Heart right ventricle (tissue), 16 donors: ENCODE measurements at regions of chr7 and their contacts with region 1.

Region 1: DNA sequence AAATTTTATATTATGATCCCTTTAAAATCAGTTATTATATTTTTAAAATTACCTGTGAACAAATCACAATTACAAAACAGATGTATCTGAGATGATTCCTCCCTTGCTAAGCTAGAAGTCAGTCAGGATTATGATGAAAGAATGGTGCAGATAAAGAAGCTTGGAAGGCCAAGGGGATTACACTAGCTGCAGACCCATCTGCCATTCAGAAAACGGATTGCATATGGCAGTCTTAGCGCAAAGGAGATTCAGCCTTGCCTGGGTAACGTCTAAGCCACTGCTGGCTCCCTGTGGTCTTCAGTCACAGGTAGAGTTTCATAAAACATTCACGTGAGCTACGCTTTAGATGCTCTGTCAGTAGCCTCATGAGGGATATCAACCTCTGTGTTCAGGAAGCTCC is 222.2 kb downstream of the POU6F2 start:
- DNase-seq: no peak
- ATAC-seq: no peak
- H3K4me3 ChIP-seq: no peak overlapping the region
- H3K27ac ChIP-seq: no peak overlapping the region
- H3K4me1 ChIP-seq: no peaks in the 10 kb centered on the region
- H3K27me3 ChIP-seq: no peaks in the 10 kb centered on the region
- CTCF ChIP-seq: no peak

Region 2: GRCh38 chr7:39144420-39144819 is 55.5 kb before region 1 on chr7:
- intact Hi-C with region 1: loop called in 1 of 10 experiments (anchors 10 kb)
- DNase-seq: no peak
- ATAC-seq: no peak
- H3K4me3 ChIP-seq: no peak overlapping the region
- H3K27ac ChIP-seq: no peak overlapping the region
- H3K4me1 ChIP-seq: no peaks in the 10 kb centered on the region
- H3K27me3 ChIP-seq: no peaks in the 10 kb centered on the region
- CTCF ChIP-seq: no peak